Transverse colon (tissue), 4 donors: ENCODE measurements at regions of chr9 and their contacts with region 1.

Region 1: DNA sequence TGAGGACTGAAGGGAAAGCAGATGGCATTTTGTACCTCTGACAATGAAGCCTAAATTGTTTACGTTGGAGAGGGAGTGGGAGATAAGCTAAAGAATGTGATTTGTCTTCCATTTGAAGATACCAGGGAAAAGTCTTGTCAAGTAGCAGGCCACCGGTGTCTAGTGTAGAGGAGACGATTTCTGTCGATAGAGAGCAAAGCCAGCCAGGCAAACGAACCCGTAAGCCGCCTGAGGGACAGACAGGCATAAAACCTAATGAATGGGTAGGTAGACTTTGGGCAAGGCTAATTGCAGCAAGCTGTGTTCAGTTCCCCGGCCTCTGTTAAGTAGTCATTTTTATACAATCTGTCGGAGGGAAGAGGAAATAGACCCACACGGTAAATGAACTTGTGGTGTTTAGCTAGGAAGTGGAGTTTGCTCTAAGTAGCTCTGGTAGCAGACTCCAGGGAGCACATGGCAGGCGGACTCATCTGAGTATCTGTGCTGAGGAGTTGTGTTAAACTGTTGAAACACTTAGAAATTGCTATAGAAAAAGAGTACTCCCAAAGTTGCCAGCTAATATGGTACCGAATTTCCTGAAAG is 28.8 kb downstream of the SMARCA2 start:
- DNase-seq: no peak
- H3K4me3 ChIP-seq: no peak overlapping the region
- H3K27ac ChIP-seq: no peak overlapping the region
- H3K4me1 ChIP-seq: peaks cover 0 to 6% (median 2%) of the 10 kb centered on the region in 4 donors
- H3K27me3 ChIP-seq: no peaks in the 10 kb centered on the region
- CTCF ChIP-seq: no peak
- EP300 ChIP-seq: no peak
- POLR2A ChIP-seq: no peak

Region 2: GRCh38 chr9:1890816-1891215 is 153.2 kb before region 1 on chr9:
- in situ Hi-C with region 1: no loop called
- intact Hi-C with region 1: no loop called
- DNase-seq: no peak
- H3K4me3 ChIP-seq: no peak overlapping the region
- H3K27ac ChIP-seq: no peak overlapping the region
- H3K4me1 ChIP-seq: no peaks in the 10 kb centered on the region
- H3K27me3 ChIP-seq: no peaks in the 10 kb centered on the region
- CTCF ChIP-seq: no peak
- EP300 ChIP-seq: no peak
- POLR2A ChIP-seq: no peak

Region 3: DNA sequence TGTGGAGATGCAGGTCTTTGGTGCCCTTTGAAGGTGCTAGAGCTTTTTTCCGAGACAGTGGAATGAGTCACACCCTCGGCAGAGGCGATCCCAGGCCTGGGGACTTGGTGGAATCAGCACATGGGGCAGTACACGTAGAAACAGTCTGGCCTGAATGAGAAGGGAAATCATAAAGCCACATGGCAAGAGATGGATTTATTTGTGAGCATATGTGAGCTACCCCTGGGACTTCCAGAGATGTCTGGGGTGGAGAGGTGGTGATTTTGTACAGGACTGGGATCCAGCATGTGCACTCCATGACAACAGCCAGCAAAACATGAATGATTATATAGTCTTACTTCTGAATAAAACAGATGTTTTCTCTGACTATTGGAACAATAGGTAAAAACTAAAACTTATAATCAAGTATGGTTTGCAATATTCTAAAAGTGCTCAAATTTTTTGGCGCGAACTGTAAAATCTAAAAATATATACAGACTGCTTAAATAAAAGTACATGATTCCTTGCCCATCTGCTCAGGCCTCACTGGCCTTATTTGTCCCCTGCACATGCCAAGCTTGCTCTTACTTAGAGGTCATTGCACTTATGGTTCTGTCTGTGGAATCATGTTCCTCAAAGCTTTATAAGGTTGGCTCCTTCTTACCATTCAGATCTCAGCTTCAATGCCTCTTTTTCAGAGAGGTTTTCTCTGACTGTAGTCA is 83.5 kb before region 1 on chr9:
- in situ Hi-C with region 1: no loop called
- intact Hi-C with region 1: no loop called
- DNase-seq: no peak
- H3K4me3 ChIP-seq: no peak overlapping the region
- H3K27ac ChIP-seq: no peak overlapping the region
- H3K4me1 ChIP-seq: peaks cover 0 to 11% (median 3%) of the 10 kb centered on the region in 4 donors
- H3K27me3 ChIP-seq: no peaks in the 10 kb centered on the region
- CTCF ChIP-seq: no peak
- EP300 ChIP-seq: no peak
- POLR2A ChIP-seq: no peak

Region 4: DNA sequence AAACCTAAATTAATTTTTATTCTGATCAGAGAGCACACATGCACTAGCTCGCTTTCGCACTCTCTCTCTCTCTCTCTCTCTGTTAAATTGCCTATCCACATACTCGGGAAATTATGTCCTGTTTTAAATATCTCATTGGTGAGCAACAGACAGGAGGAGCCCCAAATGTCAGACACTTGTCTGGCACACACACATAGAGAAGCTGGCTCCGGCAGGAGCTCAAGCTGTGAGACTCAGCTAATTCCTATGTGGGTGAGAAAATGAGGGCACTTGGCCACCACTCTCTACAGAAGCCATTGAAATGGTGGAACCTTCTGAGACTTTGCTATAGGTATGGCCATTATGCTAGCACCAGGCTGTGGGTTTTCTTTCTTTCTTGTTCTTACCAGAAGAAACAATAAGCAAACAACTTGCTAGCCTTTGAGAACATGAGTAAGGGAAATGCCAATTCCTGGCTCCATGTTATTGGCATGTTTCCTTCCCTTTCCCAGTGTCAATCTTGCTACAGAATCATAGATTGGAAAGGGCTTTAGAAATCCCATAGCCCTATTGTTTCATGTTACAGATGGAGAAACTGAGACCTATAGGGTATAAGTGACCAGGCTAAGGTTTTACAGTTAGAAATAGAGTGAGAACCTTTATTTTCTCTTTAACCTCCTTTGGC is 1472.8 kb after region 1 on chr9:
- in situ Hi-C with region 1: no loop called
- intact Hi-C with region 1: loop called (anchors 10 kb)
- DNase-seq: no peak
- H3K4me3 ChIP-seq: no peak overlapping the region
- H3K27ac ChIP-seq: no peak overlapping the region
- H3K4me1 ChIP-seq: peaks cover 0 to 3% (median under 1%) of the 10 kb centered on the region in 4 donors
- H3K27me3 ChIP-seq: no peaks in the 10 kb centered on the region
- CTCF ChIP-seq: no peak
- EP300 ChIP-seq: no peak
- POLR2A ChIP-seq: no peak